Common myeloid progenitor, CD34-positive (primary cell): ENCODE measurements at regions of chr10 and their contacts with region 1.

Region 1: DNA sequence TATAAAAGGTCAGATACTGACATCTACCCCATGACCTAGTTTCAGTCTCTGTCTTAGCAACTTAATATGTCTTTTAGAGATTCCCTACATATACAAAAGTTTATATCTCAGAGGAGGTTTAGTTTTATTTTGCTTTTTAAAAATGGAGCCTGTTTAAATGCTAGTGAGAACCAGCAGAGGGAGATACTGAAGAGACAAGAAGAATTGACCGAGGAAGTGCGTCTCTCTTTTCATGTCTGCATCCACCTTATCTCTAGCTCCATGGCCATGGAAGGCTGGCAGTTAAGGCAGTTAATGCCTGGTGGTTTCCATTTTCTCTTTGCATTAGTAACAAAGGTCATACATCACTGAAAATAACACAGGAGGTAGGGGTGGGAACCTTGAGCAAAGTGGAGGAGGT is 10.7 kb downstream of the SUV39H2 start:
- DNase-seq: peak; percentile 40 to 84 (median 66)
- H3K4me3 ChIP-seq: no peak overlapping the region
- H3K27ac ChIP-seq: no peak overlapping the region
- H3K4me1 ChIP-seq: peaks cover 0 to 6% (median 5%) of the 10 kb centered on the region in 4 experiments
- H3K27me3 ChIP-seq: no peaks in the 10 kb centered on the region

Region 2: GRCh38 chr10:14879055-14879797 is 10.1 kb before region 1 on chr10:
- CTCF ChIA-PET with region 1: interaction called, 14 read pairs
- POLR2A ChIA-PET with region 1: no interaction called
- DNase-seq: peak in 2 of 3 donors; percentile 50 to 62
- H3K4me3 ChIP-seq: peak overlapping the region; percentile 82 to 99 (median 97)
- H3K27ac ChIP-seq: peak overlapping the region; percentile 33 to 43
- H3K4me1 ChIP-seq: peaks cover 5 to 27% (median 21%) of the 10 kb centered on the region in 4 experiments
- H3K27me3 ChIP-seq: no peaks in the 10 kb centered on the region

Region 3: GRCh38 chr10:14904316-14904732 is 15.0 kb after region 1 on chr10:
- CTCF ChIA-PET with region 1: interaction called, 23 read pairs
- POLR2A ChIA-PET with region 1: no interaction called
- DNase-seq: peak; percentile 46 to 86 (median 80)
- H3K4me3 ChIP-seq: no peak overlapping the region
- H3K27ac ChIP-seq: no peak overlapping the region
- H3K4me1 ChIP-seq: peaks cover 0 to 2% (median under 1%) of the 10 kb centered on the region in 4 experiments
- H3K27me3 ChIP-seq: no peaks in the 10 kb centered on the region